Activated CD4-positive, alpha-beta T cell treated with anti-CD3 and anti-CD28 coated beads, Interleukin-2, amount 10 ng/mL, durations not matched to agents 7 days and 5 days (primary cell): ENCODE measurements at regions of chr20 and their contacts with region 1.

Region 1: DNA sequence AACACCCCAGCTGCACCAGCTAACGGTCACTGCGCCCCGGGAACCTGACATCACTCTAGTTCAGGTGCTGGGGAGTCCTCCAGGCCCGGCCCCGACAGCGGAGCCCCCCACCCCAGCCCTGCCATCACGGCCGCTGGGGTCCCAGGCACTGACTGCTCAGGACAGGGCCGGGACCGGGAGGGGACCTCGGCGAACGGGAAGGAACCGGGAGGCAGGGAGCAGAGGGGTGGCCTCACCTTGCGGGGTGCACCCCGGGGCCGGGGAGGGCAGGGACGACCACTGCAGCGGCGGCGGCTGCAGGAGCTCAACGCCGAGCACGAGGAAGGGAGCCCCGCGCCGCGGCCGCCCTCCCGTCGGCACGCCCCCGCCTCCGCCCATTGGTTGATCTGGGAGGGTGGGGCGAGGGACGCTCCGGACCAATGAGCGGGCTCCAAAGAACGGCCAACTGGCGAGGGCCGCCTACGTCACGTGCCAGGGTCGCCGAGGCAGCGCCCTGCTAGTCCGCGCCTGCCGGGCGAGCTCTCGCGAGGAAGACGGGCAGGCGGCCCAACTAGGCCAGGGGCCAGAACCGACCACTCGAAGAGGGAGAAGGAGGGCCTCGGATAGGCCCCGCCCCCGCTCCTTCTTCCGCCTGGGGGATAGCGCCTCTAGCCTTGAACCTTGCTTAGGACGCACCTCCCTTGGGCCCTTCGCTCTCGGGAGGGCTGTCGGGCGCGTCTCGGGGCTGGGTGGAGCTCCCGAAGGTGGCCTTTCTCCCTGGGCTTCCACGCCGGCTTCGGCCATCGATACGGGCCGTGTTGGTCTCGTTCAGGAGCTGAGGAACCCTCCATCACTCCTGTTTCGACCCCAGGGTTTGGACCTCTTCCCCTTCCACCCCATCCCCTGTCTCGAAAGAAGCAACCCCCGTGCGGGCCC is at the start of gene ADISSP:
- DNase-seq: peak; percentile 98
- H3K4me3 Mint-ChIP-seq: peak within 1 kb of the TSS; percentile 83
- H3K27ac Mint-ChIP-seq: peak within 1 kb of the TSS; percentile 94
- H3K4me1 Mint-ChIP-seq: peaks cover 29% of the 10 kb centered on the region
- H3K27me3 Mint-ChIP-seq: peaks cover 2% of the 10 kb centered on the region
- total RNA-seq, gene ADISSP: 27.8 to 27.9 TPM

Region 2: GRCh38 chr20:3670511-3670910 is 97.2 kb before region 1 on chr20:
- CTCF ChIA-PET with region 1: no interaction called
- POLR2A ChIA-PET with region 1: no interaction called
- DNase-seq: no peak
- H3K4me3 Mint-ChIP-seq: no peak overlapping the region
- H3K27ac Mint-ChIP-seq: no peak overlapping the region
- H3K4me1 Mint-ChIP-seq: peaks cover 20% of the 10 kb centered on the region
- H3K27me3 Mint-ChIP-seq: peaks cover 59% of the 10 kb centered on the region

Region 3: GRCh38 chr20:3753098-3753980 is 14.3 kb before region 1 on chr20:
- CTCF ChIA-PET with region 1: interaction called, 28 read pairs
- POLR2A ChIA-PET with region 1: interaction called, 3 read pairs
- DNase-seq: peak; percentile 67
- H3K4me3 Mint-ChIP-seq: no peak overlapping the region
- H3K27ac Mint-ChIP-seq: no peak overlapping the region
- H3K4me1 Mint-ChIP-seq: peaks cover 14% of the 10 kb centered on the region
- H3K27me3 Mint-ChIP-seq: no peaks in the 10 kb centered on the region

Region 4: GRCh38 chr20:3777716-3778629 is 10.3 kb after region 1 on chr20:
- CTCF ChIA-PET with region 1: interaction called, 40 read pairs
- POLR2A ChIA-PET with region 1: interaction called, 5 read pairs
- DNase-seq: no peak
- H3K4me3 Mint-ChIP-seq: peak overlapping the region; percentile 59
- H3K27ac Mint-ChIP-seq: no peak overlapping the region
- H3K4me1 Mint-ChIP-seq: peaks cover 35% of the 10 kb centered on the region
- H3K27me3 Mint-ChIP-seq: peaks cover 31% of the 10 kb centered on the region

Region 5: GRCh38 chr20:3809767-3810166 is 42.1 kb after region 1 on chr20:
- CTCF ChIA-PET with region 1: no interaction called
- POLR2A ChIA-PET with region 1: no interaction called
- DNase-seq: no peak
- H3K4me3 Mint-ChIP-seq: peak overlapping the region; percentile 2
- H3K27ac Mint-ChIP-seq: peak overlapping the region; percentile 97
- H3K4me1 Mint-ChIP-seq: peaks cover 81% of the 10 kb centered on the region
- H3K27me3 Mint-ChIP-seq: no peaks in the 10 kb centered on the region